GM13977 (cell line): ENCODE measurements at regions of chr3 and their contacts with region 1.

Region 1: GRCh38 chr3:35965908-35966307 is 326.6 kb downstream of the ARPP21 start:
- DNase-seq: no peak
- CTCF ChIP-seq: peak; percentile 37

Region 2: DNA sequence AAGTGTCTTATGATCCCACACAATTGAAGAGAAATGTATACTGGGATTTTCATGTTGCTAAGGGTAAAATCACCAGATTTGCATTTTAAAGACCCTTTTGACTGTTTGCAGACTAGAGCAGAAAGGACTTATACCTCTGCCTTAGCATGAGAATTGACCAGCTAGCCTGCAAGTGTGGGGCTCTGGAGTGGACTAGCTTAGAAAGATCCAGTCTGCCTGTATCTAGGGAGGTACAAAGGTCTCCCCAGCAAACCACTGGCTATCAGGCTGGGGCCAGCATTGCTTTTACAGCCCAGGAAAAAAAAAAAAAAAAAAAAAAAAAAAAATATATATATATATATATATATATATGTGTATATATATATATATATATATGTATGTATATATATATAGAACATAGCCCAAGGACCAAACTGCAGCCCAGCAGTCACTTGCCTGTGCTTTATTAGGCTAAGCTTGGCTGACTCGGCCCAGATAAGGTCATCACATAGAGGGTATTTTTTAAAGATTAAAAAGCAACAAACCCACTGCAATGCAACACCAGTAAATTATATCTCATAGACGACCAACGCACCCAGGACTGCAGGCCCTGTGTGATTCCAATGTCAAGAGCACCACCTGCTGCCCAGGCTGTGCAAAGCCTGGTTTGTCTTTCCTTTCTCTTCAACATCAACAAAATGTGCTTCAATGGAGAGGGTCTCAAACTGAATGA is 734.8 kb after region 1 on chr3:
- in situ Hi-C with region 1: loop called (anchors 25 kb)
- DNase-seq: peak; percentile 55
- CTCF ChIP-seq: peak; percentile 87